Dorsolateral prefrontal cortex (tissue), 120 donors: ENCODE measurements at regions of chr7 and their contacts with region 1.

Region 1: GRCh38 chr7:50869108-50869725 is 86.5 kb upstream of the GRB10 start:
- DNase-seq: peak in 1 of 10 donors; percentile 57
- H3K4me3 ChIP-seq: peak overlapping the region in 9 of 59 donors; percentile 1 to 36 (median 28)
- H3K27ac ChIP-seq: peak overlapping the region in 54 of 59 donors; percentile 4 to 85 (median 65)
- H3K27me3 ChIP-seq: peaks cover 0 to 5% (median 0%) of the 10 kb centered on the region in 45 donors
- CTCF ChIP-seq: no peak

Region 2: DNA sequence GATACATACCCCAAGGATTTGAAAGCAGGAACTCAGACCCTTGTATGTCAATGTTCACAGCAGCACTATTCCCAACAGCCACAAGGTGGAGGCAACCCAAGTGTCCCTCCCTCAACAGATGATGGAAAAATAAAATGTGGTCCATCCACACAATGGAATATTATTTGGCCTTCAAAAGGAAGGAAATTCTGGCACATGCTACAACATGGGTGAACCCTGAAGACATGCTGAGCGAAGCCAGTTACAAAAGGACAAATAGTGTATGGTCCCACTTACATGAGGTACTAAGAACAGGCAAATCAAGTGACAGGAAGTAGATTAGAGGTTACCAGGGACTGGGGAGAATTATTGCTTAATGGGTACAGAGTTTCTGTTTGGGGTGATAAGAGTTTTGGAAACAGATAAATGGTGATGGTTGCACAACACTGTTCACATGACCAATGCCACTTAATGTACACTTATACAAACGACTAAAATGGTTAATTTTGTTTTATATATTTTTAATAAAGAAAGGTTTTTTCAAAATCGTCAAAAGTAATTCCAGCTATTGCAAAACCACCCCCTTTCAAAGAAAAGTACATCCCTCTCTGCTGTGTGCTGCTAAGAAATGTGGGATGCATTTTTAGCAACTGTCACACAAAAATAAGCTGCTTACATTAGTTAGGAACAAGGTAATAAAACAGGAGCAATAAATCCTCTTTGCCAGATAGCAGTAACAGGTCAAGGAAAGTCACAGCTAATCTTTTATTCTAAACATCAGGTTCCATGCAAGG is 172.2 kb before region 1 on chr7:
- intact Hi-C with region 1: loop called in 1 of 2 experiments (anchors 10 kb)
- DNase-seq: no peak
- H3K4me3 ChIP-seq: no peak overlapping the region
- H3K27ac ChIP-seq: peak overlapping the region in 47 of 59 donors; percentile 0 to 86 (median 61)
- H3K27me3 ChIP-seq: no peaks in the 10 kb centered on the region
- CTCF ChIP-seq: peak in 44 of 56 donors; percentile 9 to 50 (median 26)

Region 3: GRCh38 chr7:50826371-50827172 is 42.6 kb before region 1 on chr7:
- intact Hi-C with region 1: loop called in 1 of 2 experiments (anchors 2 kb)
- DNase-seq: no peak
- H3K4me3 ChIP-seq: no peak overlapping the region
- H3K27ac ChIP-seq: no peak overlapping the region
- H3K27me3 ChIP-seq: peaks cover 0 to 6% (median 0%) of the 10 kb centered on the region in 45 donors
- CTCF ChIP-seq: no peak